ENCODE measurements at regions of chr4 and their contacts with region 1.

Region 1: DNA sequence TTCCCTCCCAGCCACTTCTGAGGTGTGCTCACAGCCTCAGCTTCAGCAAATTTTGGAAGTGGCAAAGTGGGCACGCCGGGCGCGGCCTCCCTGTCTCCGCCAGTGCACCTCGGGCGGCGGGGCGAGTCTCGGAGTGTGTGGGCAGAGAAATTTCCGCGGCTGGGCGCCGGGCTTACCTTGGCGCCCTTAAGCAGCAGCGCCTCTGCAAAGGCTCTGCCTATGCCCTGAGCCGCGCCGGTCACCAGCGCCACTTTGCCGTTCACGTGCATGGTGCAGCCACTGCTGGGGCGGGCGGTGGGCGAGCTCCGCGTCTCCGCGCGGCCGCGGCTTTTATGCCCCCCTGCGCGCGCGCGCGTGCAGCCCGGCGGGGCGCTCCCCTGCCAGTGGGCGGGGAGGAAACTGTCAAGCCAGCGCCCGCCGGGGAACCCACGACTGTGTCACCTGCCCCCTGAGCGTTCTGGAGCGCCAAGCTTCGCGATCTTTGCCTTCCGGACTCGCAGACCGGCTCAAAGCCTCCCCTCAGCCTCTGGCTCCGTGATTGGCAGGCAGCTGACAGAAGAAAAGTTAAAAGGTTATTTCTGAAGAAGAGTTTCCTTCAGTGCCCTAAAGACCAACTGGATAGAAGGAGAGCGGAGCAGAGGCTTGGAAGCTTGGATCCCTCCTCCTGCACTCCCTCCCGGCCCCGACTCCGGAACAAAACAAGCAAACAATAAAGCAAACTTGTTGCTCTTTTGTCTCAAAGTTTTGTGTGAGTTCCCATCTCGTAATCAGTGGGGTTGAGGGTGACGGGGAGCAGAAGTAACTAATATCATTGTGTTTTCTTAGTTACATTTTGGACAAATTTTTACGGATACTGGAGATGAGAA is at the start of gene HPGD:
- DNase-seq: peak; percentile 37
- H3K4me3 Mint-ChIP-seq: peak within 1 kb of the TSS; percentile 88
- H3K27ac Mint-ChIP-seq: no peak within 1 kb of the TSS
- H3K4me1 Mint-ChIP-seq: peaks cover 8% of the 10 kb centered on the region
- H3K27me3 Mint-ChIP-seq: no peaks in the 10 kb centered on the region
- CTCF ChIP-seq: no peak
- total RNA-seq, gene HPGD: 0.59 and 0.77 TPM in 2 replicates

Region 2: DNA sequence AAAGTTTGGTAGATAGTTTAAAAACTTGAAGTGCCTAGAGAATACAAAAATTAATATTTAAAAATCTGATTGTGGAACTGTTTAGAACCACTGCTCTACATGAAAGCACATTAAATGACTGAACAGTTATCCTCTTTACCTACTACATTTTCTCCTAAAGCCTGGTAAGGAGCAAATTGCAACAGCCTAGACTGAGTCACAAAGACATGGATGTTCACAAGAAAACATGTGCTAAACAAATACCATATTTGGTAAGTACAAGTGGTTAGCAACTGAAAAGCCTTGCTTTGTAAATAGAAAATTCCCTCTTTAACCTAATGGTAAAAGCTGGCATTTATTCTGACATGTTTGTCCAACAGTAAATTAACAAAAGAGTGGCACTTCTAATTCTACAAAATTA is 442.1 kb before region 1 on chr4:
- CTCF ChIA-PET with region 1: no interaction called
- POLR2A ChIA-PET with region 1: no interaction called
- intact Hi-C with region 1: no loop called
- DNase-seq: peak; percentile 7
- H3K4me3 Mint-ChIP-seq: no peak overlapping the region
- H3K27ac Mint-ChIP-seq: no peak overlapping the region
- H3K4me1 Mint-ChIP-seq: peaks cover 7% of the 10 kb centered on the region
- H3K27me3 Mint-ChIP-seq: peaks cover 45% of the 10 kb centered on the region
- CTCF ChIP-seq: no peak

Region 3: DNA sequence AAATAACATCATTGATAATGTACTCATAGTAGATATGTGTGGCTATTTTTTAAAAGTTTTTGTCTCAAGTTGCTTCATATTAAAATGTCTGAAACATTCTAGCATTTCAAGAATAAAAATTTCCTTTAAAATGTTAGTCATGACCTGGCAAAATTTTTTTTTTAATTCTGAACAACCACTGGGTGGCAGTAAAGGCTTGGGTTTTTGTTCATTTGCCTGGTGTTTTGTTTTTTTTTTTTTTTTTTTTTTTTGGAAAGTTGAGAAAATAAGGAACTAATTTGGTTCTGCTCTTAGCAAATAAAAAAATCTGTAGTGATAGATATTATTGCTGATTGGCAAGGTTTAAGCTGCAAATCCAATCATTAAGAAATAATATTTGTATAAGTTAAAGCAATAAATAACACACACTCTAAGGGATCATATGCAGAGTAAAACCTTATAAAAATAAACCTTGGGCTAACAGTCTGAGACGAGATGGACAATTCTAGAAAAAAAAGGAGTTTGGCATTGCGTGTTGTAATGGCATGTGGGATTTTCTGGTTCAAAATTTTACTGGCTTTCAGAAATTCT is 157.3 kb before region 1 on chr4:
- CTCF ChIA-PET with region 1: interaction called, 31 read pairs
- POLR2A ChIA-PET with region 1: interaction called, 4 read pairs
- intact Hi-C with region 1: loop called (anchors 1 kb)
- DNase-seq: peak; percentile 54
- H3K4me3 Mint-ChIP-seq: no peak overlapping the region
- H3K27ac Mint-ChIP-seq: no peak overlapping the region
- H3K4me1 Mint-ChIP-seq: no peaks in the 10 kb centered on the region
- H3K27me3 Mint-ChIP-seq: no peaks in the 10 kb centered on the region
- CTCF ChIP-seq: peak; percentile 41

Region 4: GRCh38 chr4:174377613-174378012 is 144.8 kb before region 1 on chr4:
- CTCF ChIA-PET with region 1: interaction called, 31 read pairs
- POLR2A ChIA-PET with region 1: interaction called, 3 read pairs
- intact Hi-C with region 1: no loop called
- DNase-seq: no peak
- H3K4me3 Mint-ChIP-seq: no peak overlapping the region
- H3K27ac Mint-ChIP-seq: no peak overlapping the region
- H3K4me1 Mint-ChIP-seq: no peaks in the 10 kb centered on the region
- H3K27me3 Mint-ChIP-seq: no peaks in the 10 kb centered on the region
- CTCF ChIP-seq: no peak

Region 5: GRCh38 chr4:174444390-174444789 is 78.0 kb before region 1 on chr4:
- CTCF ChIA-PET with region 1: no interaction called
- POLR2A ChIA-PET with region 1: no interaction called
- intact Hi-C with region 1: loop called (anchors 5 kb)
- DNase-seq: no peak
- H3K4me3 Mint-ChIP-seq: no peak overlapping the region
- H3K27ac Mint-ChIP-seq: no peak overlapping the region
- H3K4me1 Mint-ChIP-seq: no peaks in the 10 kb centered on the region
- H3K27me3 Mint-ChIP-seq: no peaks in the 10 kb centered on the region
- CTCF ChIP-seq: no peak

Region 6: GRCh38 chr4:174631901-174632758 is 109.7 kb after region 1 on chr4:
- CTCF ChIA-PET with region 1: interaction called, 7 read pairs
- POLR2A ChIA-PET with region 1: no interaction called
- intact Hi-C with region 1: loop called (anchors 1 kb)
- DNase-seq: peak; percentile 71
- H3K4me3 Mint-ChIP-seq: no peak overlapping the region
- H3K27ac Mint-ChIP-seq: no peak overlapping the region
- H3K4me1 Mint-ChIP-seq: no peaks in the 10 kb centered on the region
- H3K27me3 Mint-ChIP-seq: no peaks in the 10 kb centered on the region
- CTCF ChIP-seq: peak; percentile 62

Measured in MCF 10A (cell line).